SK-N-SH (cell line): ENCODE measurements at regions of chr3 and their contacts with region 1.

Region 1: DNA sequence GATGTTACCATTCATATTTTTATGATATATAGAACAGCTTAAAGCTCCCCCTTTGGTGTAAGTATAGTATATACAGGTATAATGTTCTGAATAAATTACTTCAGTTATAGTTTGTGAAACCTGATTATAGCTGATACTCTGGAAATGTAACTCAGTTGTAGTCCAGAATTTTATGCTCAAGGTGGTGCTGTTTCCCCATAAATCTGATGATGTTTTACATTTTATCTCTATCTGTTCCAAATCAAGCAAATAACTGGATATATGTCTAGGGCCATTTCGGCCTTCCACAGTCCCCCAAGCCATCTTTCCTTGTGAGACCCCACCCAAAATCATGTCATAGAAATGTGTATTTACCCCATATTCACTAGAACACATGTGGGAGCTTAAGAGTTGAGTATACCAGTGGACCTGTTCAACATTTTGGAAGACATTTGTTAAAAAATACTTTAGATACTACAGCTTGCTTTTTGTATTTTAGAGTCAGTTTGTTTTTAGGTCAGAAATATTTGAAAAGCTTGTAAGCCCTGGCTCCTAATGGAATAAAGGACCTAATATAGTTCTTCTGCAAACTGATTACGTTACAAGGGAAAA is 107.1 kb downstream of the ATG7 start:
- DNase-seq: peak; percentile 56
- H3K4me3 ChIP-seq: no peak overlapping the region
- H3K27ac ChIP-seq: no peak overlapping the region
- H3K4me1 ChIP-seq: peaks cover 6 to 12% of the 10 kb centered on the region in 2 experiments; a peak in 3 of 4 replicates
- H3K27me3 ChIP-seq: no peaks in the 10 kb centered on the region
- CTCF ChIP-seq: peak; percentile 77
- EP300 ChIP-seq: no peak
- RAD21 ChIP-seq: peak; percentile 95

Region 2: DNA sequence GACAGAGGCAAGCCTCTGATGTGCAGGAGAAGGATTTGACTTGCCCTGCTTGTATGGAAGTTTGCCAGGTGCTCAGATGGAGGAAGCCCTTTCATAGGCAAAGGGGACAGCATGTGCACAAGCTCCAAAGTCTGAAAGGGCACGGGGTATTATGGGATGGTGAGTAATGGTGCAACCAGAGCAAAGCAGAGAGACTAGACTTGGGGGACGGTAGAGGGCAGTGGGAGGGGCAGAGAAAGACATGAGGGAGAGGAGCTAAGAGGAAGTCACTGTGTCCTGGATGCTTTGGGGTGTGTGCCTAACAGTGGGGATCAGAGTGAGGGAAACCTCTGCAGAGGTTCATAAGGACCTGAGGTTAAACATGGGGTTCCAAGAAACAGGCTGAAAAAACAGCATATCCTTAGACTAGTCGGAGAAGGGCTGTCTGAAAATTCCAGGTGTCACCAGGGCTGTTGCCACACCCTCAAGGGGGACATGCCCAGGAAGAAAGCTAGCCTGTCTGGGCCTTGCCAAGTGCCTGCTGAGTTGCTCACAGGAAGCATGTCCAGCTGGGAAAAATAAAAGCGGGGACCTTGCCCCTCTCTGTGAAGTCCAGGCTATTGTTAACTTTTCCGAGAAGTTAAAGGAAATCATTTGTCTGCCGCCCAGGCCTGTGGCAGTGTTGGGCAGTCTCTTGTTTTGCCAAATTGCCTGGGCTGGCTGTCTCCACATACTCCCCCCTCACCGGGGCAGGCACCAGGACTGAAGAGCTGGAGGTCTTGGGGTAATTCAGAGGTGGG is 177.9 kb before region 1 on chr3:
- CTCF ChIA-PET with region 1: no interaction called
- POLR2A ChIA-PET with region 1: no interaction called
- DNase-seq: no peak
- H3K4me3 ChIP-seq: no peak overlapping the region
- H3K27ac ChIP-seq: peak overlapping the region; percentile 73 to 94
- H3K4me1 ChIP-seq: peaks cover 29 to 36% of the 10 kb centered on the region in 2 experiments
- H3K27me3 ChIP-seq: no peaks in the 10 kb centered on the region
- CTCF ChIP-seq: no peak
- EP300 ChIP-seq: peak in 1 of 2 experiments; percentile 70; a peak in 2 of 4 replicates
- RAD21 ChIP-seq: no peak

Region 3: DNA sequence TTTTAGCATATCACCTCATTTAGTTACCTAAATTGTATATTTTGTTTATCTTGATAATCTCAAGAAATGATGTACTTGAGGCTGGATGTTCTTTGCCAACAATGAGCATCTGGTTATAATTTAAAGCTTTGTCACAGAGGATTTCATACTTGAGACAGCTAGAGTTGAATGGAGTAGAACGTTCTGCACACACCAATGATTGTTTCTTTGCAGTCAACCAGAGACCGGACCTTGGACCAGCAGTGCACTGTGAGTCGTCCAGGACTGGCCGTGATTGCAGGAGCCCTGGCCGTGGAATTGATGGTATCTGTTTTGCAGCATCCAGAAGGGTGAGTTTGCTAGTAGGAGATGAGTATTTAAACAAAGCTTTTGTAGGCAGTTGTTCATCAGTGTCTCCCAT is 16.7 kb before region 1 on chr3:
- CTCF ChIA-PET with region 1: interaction called, 11 read pairs
- POLR2A ChIA-PET with region 1: no interaction called
- DNase-seq: peak; percentile 62
- H3K4me3 ChIP-seq: no peak overlapping the region
- H3K27ac ChIP-seq: peak overlapping the region; percentile 20 to 31; a peak in 3 of 4 replicates
- H3K4me1 ChIP-seq: peaks cover 6 to 8% of the 10 kb centered on the region in 2 experiments
- H3K27me3 ChIP-seq: no peaks in the 10 kb centered on the region
- CTCF ChIP-seq: no peak
- EP300 ChIP-seq: peak; percentile 5 to 37; a peak in 1 of 4 replicates
- RAD21 ChIP-seq: no peak

Region 4: DNA sequence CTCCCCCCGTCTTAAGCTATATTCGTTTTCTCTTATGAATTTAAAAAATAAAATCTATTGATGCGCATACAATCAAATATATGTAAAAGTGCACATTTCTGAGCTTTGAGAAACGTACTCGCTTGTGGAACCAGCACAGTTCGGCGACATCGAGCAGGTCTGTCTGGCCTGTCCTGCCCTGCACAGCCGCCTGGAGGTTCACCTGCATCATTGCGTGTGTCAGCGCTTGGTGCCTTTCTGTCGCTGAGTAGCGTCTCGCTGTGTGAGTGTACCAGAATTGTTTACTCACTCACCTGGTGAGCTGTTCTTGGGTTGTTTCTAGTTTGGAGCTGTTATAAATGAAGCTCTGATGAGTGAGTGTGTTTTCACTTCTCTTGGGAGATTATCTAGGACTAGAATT is 160.3 kb after region 1 on chr3:
- CTCF ChIA-PET with region 1: interaction called, 13 read pairs
- POLR2A ChIA-PET with region 1: no interaction called
- DNase-seq: no peak
- H3K4me3 ChIP-seq: no peak overlapping the region
- H3K27ac ChIP-seq: 0 out of 4 replicates have a peak overlapping the region, but pooled peaks of 1 of the 2 experiments have one; percentile 18
- H3K4me1 ChIP-seq: peaks cover 0 to 15% of the 10 kb centered on the region in 2 experiments; a peak in 1 of 4 replicates
- H3K27me3 ChIP-seq: no peaks in the 10 kb centered on the region
- CTCF ChIP-seq: no peak
- EP300 ChIP-seq: no peak
- RAD21 ChIP-seq: peak; percentile 28

Region 5: DNA sequence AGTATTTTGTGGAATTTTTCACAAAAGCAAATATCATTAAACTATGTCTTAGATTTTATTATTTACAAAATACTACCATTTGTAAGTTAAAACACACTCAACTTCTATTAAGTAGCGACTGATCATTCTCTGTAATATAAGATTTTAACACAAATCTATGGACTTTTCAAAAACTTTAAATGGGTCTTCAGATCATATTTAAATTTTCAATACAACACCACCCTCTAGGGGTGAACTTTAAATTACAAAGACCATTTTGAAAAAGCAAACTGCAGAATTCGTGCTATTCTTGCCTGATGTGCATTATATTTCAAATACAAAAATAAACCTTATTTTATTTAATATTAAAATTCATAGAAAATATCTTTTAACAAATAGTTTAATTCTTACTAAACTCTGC is 272.6 kb after region 1 on chr3:
- CTCF ChIA-PET with region 1: interaction called, 147 read pairs
- POLR2A ChIA-PET with region 1: no interaction called
- DNase-seq: peak; percentile 43
- H3K4me3 ChIP-seq: no peak overlapping the region
- H3K27ac ChIP-seq: no peak overlapping the region
- H3K4me1 ChIP-seq: peaks cover 0 to 2% of the 10 kb centered on the region in 2 experiments; a peak in 2 of 4 replicates
- H3K27me3 ChIP-seq: no peaks in the 10 kb centered on the region
- CTCF ChIP-seq: peak; percentile 64
- EP300 ChIP-seq: no peak
- RAD21 ChIP-seq: peak; percentile 72

Region 6: GRCh38 chr3:11826628-11827265 is 447.4 kb after region 1 on chr3:
- CTCF ChIA-PET with region 1: interaction called, 14 read pairs
- POLR2A ChIA-PET with region 1: no interaction called
- DNase-seq: no peak
- H3K4me3 ChIP-seq: no peak overlapping the region
- H3K27ac ChIP-seq: peak overlapping the region in 1 of 2 experiments; percentile 12; a peak in 1 of 4 replicates
- H3K4me1 ChIP-seq: no peaks in the 10 kb centered on the region
- H3K27me3 ChIP-seq: no peaks in the 10 kb centered on the region
- CTCF ChIP-seq: no peak
- EP300 ChIP-seq: no peak
- RAD21 ChIP-seq: no peak

Region 7: GRCh38 chr3:12046406-12046805 is 667.1 kb after region 1 on chr3:
- CTCF ChIA-PET with region 1: interaction called, 10 read pairs
- POLR2A ChIA-PET with region 1: no interaction called
- DNase-seq: peak; percentile 42
- H3K4me3 ChIP-seq: no peak overlapping the region
- H3K27ac ChIP-seq: no peak overlapping the region
- H3K4me1 ChIP-seq: peaks cover 0 to 7% of the 10 kb centered on the region in 2 experiments; a peak in 2 of 4 replicates
- H3K27me3 ChIP-seq: no peaks in the 10 kb centered on the region
- CTCF ChIP-seq: peak; percentile 26; the same call in 1 of the 2 replicates
- EP300 ChIP-seq: no peak
- RAD21 ChIP-seq: peak; percentile 85